OCI-LY7 (cell line): ENCODE measurements at regions of chr15 and their contacts with region 1.

Region 1: GRCh38 chr15:92954578-92954977 is 54.5 kb downstream of the CHD2 start:
- DNase-seq: peak; percentile 25
- H3K4me3 ChIP-seq: no peak overlapping the region
- H3K27ac ChIP-seq: no peak overlapping the region
- H3K4me1 ChIP-seq: no peaks in the 10 kb centered on the region
- CTCF ChIP-seq: peak; percentile 81

Region 2: GRCh38 chr15:92268906-92269305 is 685.7 kb before region 1 on chr15:
- CTCF ChIA-PET with region 1: no interaction called
- POLR2A ChIA-PET with region 1: no interaction called
- intact Hi-C with region 1: no loop called
- DNase-seq: no peak
- H3K4me3 ChIP-seq: no peak overlapping the region
- H3K27ac ChIP-seq: no peak overlapping the region
- H3K4me1 ChIP-seq: no peaks in the 10 kb centered on the region
- CTCF ChIP-seq: no peak

Region 3: GRCh38 chr15:92821491-92822080 is 133.0 kb before region 1 on chr15:
- CTCF ChIA-PET with region 1: no interaction called
- POLR2A ChIA-PET with region 1: no interaction called
- intact Hi-C with region 1: no loop called
- DNase-seq: no peak
- H3K4me3 ChIP-seq: peak overlapping the region; percentile 2
- H3K27ac ChIP-seq: peak overlapping the region; percentile 71
- H3K4me1 ChIP-seq: peaks cover 82% of the 10 kb centered on the region
- CTCF ChIP-seq: no peak

Region 4: GRCh38 chr15:92884436-92885223 is 69.9 kb before region 1 on chr15:
- CTCF ChIA-PET with region 1: no interaction called
- POLR2A ChIA-PET with region 1: no interaction called
- intact Hi-C with region 1: no loop called
- DNase-seq: peak; percentile 50
- H3K4me3 ChIP-seq: peak overlapping the region; percentile 86
- H3K27ac ChIP-seq: peak overlapping the region; percentile 82
- H3K4me1 ChIP-seq: peaks cover 48% of the 10 kb centered on the region
- CTCF ChIP-seq: no peak

Region 5: GRCh38 chr15:92968926-92969651 is 14.5 kb after region 1 on chr15:
- CTCF ChIA-PET with region 1: no interaction called
- POLR2A ChIA-PET with region 1: interaction called, 10 read pairs
- intact Hi-C with region 1: no loop called
- DNase-seq: no peak
- H3K4me3 ChIP-seq: no peak overlapping the region
- H3K27ac ChIP-seq: no peak overlapping the region
- H3K4me1 ChIP-seq: no peaks in the 10 kb centered on the region
- CTCF ChIP-seq: 0 out of 2 replicates have a peak, but pooled peaks have one; percentile 27